ENCODE measurements at regions of chr16 and their contacts with region 1.

Region 1: DNA sequence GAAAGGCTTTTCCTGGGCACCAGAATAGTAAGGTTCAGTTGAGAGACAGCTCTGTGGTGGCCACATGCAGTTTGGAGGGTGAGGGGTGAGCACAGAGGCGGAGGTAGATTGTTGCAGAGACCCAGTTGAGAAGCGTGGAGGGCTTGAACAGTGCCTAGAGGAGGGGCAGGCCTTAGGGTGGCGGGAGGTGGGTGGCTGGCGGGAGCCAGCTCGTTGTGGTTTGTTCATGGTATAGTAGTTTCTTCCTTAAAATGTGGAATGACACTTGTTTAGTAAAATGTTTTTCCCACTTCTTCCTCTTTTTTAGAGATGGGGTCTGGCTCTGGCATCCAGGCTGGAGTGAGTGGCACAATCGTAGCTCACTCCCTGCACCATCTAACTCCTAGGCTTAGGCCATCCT is 14.2 kb downstream of the USP10 start:
- DNase-seq: no peak
- H3K4me3 Mint-ChIP-seq: no peak overlapping the region
- H3K27ac Mint-ChIP-seq: no peak overlapping the region
- H3K4me1 Mint-ChIP-seq: peaks cover 34% of the 10 kb centered on the region
- H3K27me3 Mint-ChIP-seq: no peaks in the 10 kb centered on the region

Region 2: DNA sequence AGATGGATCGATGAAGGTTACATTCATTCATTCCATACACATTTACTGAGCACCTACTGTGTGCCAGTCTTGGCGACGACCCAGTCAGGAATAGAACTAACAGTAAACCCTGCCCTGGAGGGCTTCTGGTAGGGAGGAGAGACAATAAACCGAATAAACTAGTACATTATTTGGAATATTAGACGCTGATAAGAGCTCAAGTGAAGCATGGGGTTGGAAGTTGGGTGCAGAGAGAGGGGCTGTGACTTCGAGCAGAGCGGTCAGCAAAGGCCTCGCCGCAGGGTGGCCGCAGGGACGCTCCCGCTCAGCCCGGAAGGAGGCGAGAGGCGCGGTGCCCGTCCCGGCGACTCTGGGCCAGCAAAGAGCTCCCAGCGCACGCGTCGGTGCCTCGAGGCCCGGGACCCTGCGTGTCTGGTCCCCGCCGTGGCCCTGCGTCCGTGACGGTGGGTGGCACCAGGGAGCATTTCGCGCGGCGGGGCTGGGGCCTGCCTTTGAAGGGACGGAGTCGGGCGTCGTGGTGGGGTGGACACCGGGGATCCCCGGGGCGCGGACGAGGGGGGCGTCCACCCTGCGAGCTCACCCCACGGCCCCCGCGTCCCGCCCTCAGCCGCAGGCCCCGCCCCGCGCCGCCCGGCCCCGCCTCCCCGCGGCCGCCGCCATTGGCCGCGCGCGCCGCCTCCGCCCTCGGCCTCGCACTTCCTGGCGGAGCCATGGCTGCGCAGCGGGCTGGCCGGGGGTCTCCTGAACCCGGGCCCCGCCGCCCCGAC is 66.0 kb before region 1 on chr16 and contains the start of gene KLHL36:
- CTCF ChIA-PET with region 1: no interaction called
- POLR2A ChIA-PET with region 1: no interaction called
- DNase-seq: peak; percentile 74
- H3K4me3 Mint-ChIP-seq: peak within 1 kb of the TSS; percentile 79
- H3K27ac Mint-ChIP-seq: peak within 1 kb of the TSS; percentile 63
- H3K4me1 Mint-ChIP-seq: peaks cover 42% of the 10 kb centered on the region
- H3K27me3 Mint-ChIP-seq: peaks cover 19% of the 10 kb centered on the region
- total RNA-seq, gene KLHL36: 45.7 to 49.0 TPM

Region 3: GRCh38 chr16:84699712-84700445 is 14.1 kb before region 1 on chr16 and contains the start of gene USP10:
- CTCF ChIA-PET with region 1: interaction called, 5 read pairs
- POLR2A ChIA-PET with region 1: interaction called, 10 read pairs
- DNase-seq: peak; percentile 87
- H3K4me3 Mint-ChIP-seq: peak within 1 kb of the TSS; percentile 97
- H3K27ac Mint-ChIP-seq: peak within 1 kb of the TSS; percentile 94
- H3K4me1 Mint-ChIP-seq: peaks cover 41% of the 10 kb centered on the region
- H3K27me3 Mint-ChIP-seq: peaks cover 4% of the 10 kb centered on the region
- total RNA-seq, gene USP10: 92.2 to 94.4 TPM

Region 4: GRCh38 chr16:84759061-84759460 is 45.0 kb after region 1 on chr16:
- CTCF ChIA-PET with region 1: no interaction called
- POLR2A ChIA-PET with region 1: no interaction called
- DNase-seq: no peak
- H3K4me3 Mint-ChIP-seq: no peak overlapping the region
- H3K27ac Mint-ChIP-seq: peak overlapping the region; percentile 44
- H3K4me1 Mint-ChIP-seq: peaks cover 46% of the 10 kb centered on the region
- H3K27me3 Mint-ChIP-seq: no peaks in the 10 kb centered on the region

Region 5: GRCh38 chr16:84829168-84829965 is 115.3 kb after region 1 on chr16:
- CTCF ChIA-PET with region 1: no interaction called
- POLR2A ChIA-PET with region 1: no interaction called
- DNase-seq: no peak
- H3K4me3 Mint-ChIP-seq: no peak overlapping the region
- H3K27ac Mint-ChIP-seq: no peak overlapping the region
- H3K4me1 Mint-ChIP-seq: no peaks in the 10 kb centered on the region
- H3K27me3 Mint-ChIP-seq: peaks cover 2% of the 10 kb centered on the region

Region 6: GRCh38 chr16:84881702-84882521 is 167.9 kb after region 1 on chr16:
- CTCF ChIA-PET with region 1: no interaction called
- POLR2A ChIA-PET with region 1: no interaction called
- DNase-seq: no peak
- H3K4me3 Mint-ChIP-seq: no peak overlapping the region
- H3K27ac Mint-ChIP-seq: no peak overlapping the region
- H3K4me1 Mint-ChIP-seq: peaks cover 9% of the 10 kb centered on the region
- H3K27me3 Mint-ChIP-seq: peaks cover 8% of the 10 kb centered on the region

Measured in activated CD4-positive, alpha-beta memory T cell treated with anti-CD3 and anti-CD28 coated beads, Interleukin-2, amount 10 ng/mL, durations not matched to agents 7 days and 5 days (primary cell).